Cardiac septum (tissue), 1 donor: ENCODE measurements at regions of chr2 and their contacts with region 1.

Region 1: DNA sequence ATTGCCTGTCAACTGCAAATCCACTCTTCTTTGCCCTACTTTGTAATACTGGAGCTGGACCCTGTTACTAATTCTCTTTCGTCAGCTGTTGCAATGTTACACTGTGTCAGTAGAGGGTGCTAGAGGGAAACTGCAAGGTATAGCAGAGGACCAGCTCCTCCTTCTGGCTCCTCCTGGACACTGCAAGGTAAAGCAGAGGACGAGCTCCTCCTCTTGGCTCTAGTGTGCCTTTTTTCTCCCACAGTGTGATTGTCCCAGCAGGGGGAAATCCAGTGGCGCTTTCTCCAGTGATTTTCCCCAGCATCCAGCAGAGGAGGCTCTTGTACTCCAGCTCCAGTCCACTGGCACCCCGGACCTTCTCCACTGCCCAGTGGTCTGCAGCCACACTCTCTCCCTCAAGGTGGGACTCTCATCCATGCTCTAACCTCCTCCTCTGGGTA is 95.6 kb downstream of the CAPN13 start:
- DNase-seq: peak; percentile 89

Region 2: GRCh38 chr2:30165050-30165520 is 546.6 kb before region 1 on chr2:
- intact Hi-C with region 1: loop called (anchors 2 kb)
- DNase-seq: no peak

Region 3: DNA sequence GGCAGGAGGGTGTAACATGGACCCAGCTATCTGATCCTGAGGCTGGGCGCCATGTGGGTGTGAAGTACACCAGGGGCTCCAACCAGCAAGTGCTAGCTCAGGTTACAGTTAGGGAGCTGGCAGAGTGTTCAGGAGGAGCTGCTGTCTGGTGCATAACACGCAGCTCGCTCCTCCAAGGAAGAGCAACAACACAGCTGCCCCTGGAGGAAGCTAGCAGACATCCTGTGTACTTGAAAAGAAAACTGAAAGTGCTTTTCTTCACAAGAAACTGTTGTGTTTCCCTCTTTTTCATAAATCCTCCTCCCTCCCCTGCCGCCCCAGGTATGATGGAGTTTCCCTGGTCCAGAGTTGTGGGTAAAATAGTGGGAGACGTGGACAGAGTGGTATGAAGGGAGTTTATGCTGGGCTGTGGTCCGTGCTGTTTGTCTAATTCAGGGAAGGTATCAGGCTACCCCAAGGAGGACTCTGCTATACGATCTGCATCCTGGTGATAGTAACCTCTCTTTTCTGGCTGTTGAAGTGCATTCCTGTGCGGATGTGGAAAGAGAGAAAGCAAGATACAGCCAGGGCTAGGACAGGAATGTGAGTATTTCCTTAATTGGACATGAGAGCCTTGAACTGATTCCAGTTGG is 486.4 kb before region 1 on chr2:
- intact Hi-C with region 1: loop called (anchors 5 kb)
- DNase-seq: no peak

Region 4: GRCh38 chr2:30670453-30670852 is 41.2 kb before region 1 on chr2:
- intact Hi-C with region 1: no loop called
- DNase-seq: no peak

Region 5: GRCh38 chr2:30862054-30862651 is 150.5 kb after region 1 on chr2:
- intact Hi-C with region 1: loop called (anchors 5 kb)
- DNase-seq: no peak

Region 6: DNA sequence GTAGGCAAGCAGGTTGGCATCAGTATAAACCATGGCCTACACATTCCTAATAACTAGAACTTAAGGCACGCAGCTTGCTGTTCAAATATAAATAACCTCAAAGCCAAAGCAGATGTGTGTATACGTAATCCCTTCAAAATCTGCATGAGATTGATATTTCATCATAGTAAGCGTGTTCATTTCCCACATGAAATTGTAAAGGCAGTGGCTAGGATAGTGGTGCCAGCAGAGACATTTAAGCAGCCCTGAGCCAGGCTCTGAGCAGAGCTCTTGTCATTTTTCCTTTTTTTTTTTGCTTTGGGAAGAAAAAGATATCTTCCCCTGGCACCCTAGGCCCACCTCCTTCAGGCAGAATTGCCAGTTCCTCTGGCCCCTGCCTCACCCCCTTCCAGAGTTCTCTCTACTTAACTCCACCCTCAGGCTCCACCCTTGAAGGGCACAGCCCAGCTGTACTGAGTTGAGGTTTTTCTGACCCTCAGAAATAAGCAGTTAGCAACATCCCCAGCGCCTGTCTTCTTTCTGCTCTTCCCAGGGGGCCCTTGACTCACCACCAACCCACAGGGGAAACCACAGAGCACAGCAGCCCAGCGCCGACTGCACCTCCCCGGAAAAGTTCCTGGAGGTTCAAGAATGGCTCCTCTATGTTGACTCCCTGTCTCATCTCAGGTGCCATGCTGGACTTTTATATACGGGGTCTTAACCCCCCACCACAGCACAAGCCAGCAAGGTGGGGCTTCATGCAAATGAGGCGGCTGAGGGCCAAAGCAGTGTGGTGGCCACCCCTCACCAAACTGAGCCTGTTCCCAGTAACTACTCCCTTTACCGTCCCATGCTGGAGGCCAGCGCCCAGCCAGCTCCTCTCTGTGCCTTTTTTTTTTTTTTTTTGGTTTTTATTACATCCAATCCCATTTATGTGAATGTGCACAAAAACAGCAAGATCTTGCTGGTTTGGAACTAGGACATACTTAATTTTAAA is 607.0 kb after region 1 on chr2:
- intact Hi-C with region 1: no loop called
- DNase-seq: no peak

Region 7: DNA sequence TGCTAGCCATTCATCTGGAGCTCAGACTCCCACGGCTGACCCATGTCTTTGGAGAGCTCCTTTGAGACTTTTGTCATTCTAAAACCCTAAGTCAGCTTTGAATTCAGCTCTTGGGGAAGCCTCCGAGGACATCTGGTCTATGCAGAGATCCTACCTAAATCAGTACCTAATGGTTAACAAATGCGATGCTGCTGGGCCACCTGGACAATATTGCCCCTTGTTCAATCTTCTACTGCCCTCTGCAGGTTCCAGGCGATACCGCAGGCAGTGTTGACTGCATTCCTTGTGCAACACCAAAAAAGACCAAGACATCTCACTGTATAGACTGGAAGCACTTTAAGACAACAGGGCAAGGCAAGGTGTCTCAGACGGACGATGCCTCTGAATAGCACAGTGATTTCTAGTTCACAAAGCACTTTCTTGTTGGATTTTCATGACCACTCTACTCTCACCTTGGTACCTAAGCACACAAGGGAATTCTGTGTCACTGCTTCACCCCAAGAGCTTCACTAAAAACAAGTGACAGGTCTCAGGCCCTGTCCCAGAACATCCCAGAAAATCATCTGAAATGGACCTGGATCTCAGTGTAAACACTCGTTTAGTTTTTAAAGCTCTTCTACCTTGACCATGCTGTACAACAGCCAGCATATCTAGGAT is 622.0 kb after region 1 on chr2:
- intact Hi-C with region 1: loop called (anchors 1 kb)
- DNase-seq: no peak